AG04449 (cell line): ENCODE measurements at regions of chr6 and their contacts with region 1.

Region 1: GRCh38 chr6:36340618-36341454 is 4.1 kb upstream of the BNIP5 start:
- DNase-seq: no peak
- H3K4me3 ChIP-seq: peak overlapping the region; percentile 6
- CTCF ChIP-seq: peak; percentile 97

Region 2: DNA sequence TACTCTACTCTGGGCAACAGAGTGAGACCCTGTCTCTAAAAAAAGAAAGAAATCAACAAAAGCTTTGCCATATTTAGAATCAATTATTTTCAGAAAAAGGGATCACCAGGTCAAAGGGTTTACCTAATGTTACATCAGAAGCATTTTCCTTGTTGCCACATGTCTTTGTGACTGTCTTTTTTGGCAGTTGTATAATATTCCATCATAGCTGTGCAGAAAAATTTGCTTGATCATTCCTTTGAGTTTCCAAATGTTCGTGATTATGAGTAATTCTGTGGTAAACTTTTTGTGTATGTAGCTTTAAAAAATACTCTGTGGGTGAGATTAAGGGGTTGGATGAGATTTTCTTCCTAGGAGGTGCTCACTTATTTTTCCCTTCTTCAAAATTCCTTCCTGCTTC is 44.6 kb before region 1 on chr6:
- CTCF ChIA-PET with region 1: interaction called, 11 read pairs
- POLR2A ChIA-PET with region 1: no interaction called
- DNase-seq: no peak
- H3K4me3 ChIP-seq: no peak overlapping the region
- CTCF ChIP-seq: no peak

Region 3: GRCh38 chr6:36314221-36315014 is 26.4 kb before region 1 on chr6:
- CTCF ChIA-PET with region 1: interaction called, 41 read pairs
- POLR2A ChIA-PET with region 1: interaction called, 3 read pairs
- DNase-seq: no peak
- H3K4me3 ChIP-seq: no peak overlapping the region
- CTCF ChIP-seq: no peak

Region 4: GRCh38 chr6:36326356-36326995 is 14.4 kb before region 1 on chr6:
- CTCF ChIA-PET with region 1: interaction called, 41 read pairs
- POLR2A ChIA-PET with region 1: no interaction called
- DNase-seq: no peak
- H3K4me3 ChIP-seq: no peak overlapping the region
- CTCF ChIP-seq: no peak

Region 5: DNA sequence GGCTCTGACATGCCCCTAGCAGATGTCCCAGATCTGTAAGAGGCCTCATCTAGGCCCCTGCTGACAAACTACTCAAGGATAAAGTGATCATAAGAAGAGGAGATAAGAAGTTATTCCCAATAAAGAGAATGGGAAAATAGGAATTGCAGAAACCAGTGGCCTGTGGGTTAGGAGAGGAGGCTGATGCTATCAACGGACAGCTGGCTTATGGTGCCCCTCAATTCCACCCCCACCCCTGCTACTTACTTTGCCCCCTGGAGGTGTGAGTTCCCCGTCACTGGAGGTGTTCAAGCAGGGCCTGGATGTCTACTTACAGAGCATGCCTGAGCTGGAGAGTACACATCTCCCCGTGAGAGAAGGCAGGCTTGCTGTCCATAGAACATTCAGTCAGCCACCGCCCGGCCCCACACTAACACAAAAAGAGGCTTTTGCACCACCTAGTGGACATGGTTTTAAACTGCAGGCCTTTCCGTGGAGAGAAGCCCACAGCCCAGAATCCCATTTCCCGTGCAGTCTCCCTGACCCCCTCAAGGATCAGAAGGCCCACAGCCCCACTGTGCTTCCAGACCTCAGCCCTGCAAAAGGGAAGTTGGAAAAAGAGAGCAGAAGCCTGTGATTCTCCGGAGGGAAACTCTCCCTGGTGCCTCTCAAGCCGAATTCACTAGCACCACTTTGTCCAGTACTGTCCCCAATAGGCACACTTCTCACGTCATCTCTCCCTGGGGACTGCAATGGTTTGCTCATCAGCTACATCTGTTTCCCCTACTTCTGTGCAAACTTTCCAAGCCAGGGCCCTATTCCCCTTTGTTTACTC is 19.6 kb after region 1 on chr6:
- CTCF ChIA-PET with region 1: interaction called, 267 read pairs
- POLR2A ChIA-PET with region 1: no interaction called
- DNase-seq: no peak
- H3K4me3 ChIP-seq: no peak overlapping the region
- CTCF ChIP-seq: peak; percentile 82

Region 6: GRCh38 chr6:36368921-36369865 is 28.4 kb after region 1 on chr6:
- CTCF ChIA-PET with region 1: interaction called, 102 read pairs
- POLR2A ChIA-PET with region 1: no interaction called
- DNase-seq: peak; percentile 93
- H3K4me3 ChIP-seq: no peak overlapping the region
- CTCF ChIP-seq: no peak

Region 7: DNA sequence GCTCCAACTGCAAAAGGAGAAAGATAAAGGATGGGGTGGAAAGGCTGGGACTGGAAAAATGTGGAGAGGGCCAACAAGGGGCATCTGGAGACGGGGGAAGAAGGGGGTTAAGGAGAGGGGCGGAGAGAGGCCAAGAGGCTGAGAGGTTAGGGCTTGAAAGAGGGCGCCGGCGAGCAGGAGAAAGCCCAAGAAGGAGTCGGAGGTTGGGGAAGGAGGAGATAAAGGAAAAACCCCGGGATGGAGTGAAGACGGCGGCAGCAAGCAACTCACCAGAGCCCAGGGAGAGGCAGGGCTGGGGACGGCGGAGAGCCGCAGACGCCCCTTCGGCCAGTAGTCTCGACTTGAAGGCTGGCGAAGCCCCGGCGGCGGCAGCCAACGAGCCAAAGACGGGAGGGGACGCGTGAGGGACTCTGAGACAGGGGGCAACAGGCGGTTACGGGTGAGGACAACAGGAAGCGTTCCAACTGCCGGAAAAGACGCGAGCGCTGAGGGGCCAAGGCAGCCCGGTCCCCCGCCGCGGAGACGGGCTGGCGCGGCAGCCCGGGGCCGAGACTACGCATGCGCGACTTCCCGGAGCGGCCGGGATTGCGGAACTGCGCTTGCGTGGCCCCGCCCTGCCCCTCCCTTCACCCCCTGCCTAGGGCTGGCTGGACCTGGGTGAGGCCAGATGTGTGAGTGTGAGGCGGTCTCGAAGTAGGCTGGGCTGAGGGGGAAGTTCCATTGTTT is 206.2 kb after region 1 on chr6 and contains the start of gene STK38:
- CTCF ChIA-PET with region 1: no interaction called
- POLR2A ChIA-PET with region 1: no interaction called
- DNase-seq: no peak
- H3K4me3 ChIP-seq: peak within 1 kb of the TSS; percentile 98
- CTCF ChIP-seq: no peak